Psoas muscle (tissue), 8 donors: ENCODE measurements at regions of chr11 and their contacts with region 1.

Region 1: GRCh38 chr11:46144741-46145140 is 23.5 kb upstream of the PHF21A start:
- DNase-seq: no peak
- ATAC-seq: no peak
- H3K4me3 ChIP-seq: no peak overlapping the region
- H3K27ac ChIP-seq: no peak overlapping the region
- H3K4me1 ChIP-seq: no peaks in the 10 kb centered on the region
- H3K27me3 ChIP-seq: peaks cover 0 to 19% (median 0%) of the 10 kb centered on the region in 3 donors
- CTCF ChIP-seq: no peak

Region 2: GRCh38 chr11:45930031-45930794 is 214.5 kb before region 1 on chr11:
- intact Hi-C with region 1: no loop called
- DNase-seq: no peak
- ATAC-seq: peak; percentile 33 to 54 (median 44)
- H3K4me3 ChIP-seq: no peak overlapping the region
- H3K27ac ChIP-seq: no peak overlapping the region
- H3K4me1 ChIP-seq: no peaks in the 10 kb centered on the region
- H3K27me3 ChIP-seq: peaks cover 0 to 7% (median 0%) of the 10 kb centered on the region in 3 donors
- CTCF ChIP-seq: no peak

Region 3: GRCh38 chr11:46160100-46160499 is 15.4 kb after region 1 on chr11:
- intact Hi-C with region 1: no loop called
- DNase-seq: no peak
- ATAC-seq: peak in 2 of 4 donors; percentile 21 to 57
- H3K4me3 ChIP-seq: no peak overlapping the region
- H3K27ac ChIP-seq: no peak overlapping the region
- H3K4me1 ChIP-seq: no peaks in the 10 kb centered on the region
- H3K27me3 ChIP-seq: peaks cover 0 to 35% (median 7%) of the 10 kb centered on the region in 3 donors
- CTCF ChIP-seq: no peak

Region 4: DNA sequence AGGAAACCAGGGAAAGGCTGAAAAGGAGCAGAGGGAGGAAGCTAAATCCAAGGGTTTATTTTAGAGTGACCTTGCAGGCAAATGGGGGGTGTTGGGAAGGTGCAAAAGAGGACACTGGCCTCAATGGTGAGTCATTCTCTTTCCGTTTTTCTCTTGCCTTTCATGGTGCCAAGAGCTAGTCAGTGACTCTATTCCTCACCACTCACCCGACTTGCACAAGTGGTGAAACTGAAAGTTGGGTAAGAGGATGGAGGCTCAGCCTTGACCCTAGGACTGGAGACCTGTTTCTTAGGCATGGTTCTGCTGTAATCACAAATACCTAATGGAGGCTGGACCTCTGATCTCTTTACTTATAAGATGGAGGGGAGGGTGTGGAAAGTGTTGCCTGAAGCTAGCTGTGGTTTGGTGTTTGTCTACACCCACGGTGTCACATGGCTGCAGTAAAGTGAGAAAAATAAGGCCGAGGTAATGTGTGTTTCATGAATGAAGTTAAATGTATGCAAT is 65.4 kb after region 1 on chr11:
- intact Hi-C with region 1: no loop called
- DNase-seq: no peak
- ATAC-seq: peak in 2 of 4 donors; percentile 48
- H3K4me3 ChIP-seq: no peak overlapping the region
- H3K27ac ChIP-seq: no peak overlapping the region
- H3K4me1 ChIP-seq: no peaks in the 10 kb centered on the region
- H3K27me3 ChIP-seq: peaks cover 0 to 20% (median 0%) of the 10 kb centered on the region in 3 donors
- CTCF ChIP-seq: no peak

Region 5: DNA sequence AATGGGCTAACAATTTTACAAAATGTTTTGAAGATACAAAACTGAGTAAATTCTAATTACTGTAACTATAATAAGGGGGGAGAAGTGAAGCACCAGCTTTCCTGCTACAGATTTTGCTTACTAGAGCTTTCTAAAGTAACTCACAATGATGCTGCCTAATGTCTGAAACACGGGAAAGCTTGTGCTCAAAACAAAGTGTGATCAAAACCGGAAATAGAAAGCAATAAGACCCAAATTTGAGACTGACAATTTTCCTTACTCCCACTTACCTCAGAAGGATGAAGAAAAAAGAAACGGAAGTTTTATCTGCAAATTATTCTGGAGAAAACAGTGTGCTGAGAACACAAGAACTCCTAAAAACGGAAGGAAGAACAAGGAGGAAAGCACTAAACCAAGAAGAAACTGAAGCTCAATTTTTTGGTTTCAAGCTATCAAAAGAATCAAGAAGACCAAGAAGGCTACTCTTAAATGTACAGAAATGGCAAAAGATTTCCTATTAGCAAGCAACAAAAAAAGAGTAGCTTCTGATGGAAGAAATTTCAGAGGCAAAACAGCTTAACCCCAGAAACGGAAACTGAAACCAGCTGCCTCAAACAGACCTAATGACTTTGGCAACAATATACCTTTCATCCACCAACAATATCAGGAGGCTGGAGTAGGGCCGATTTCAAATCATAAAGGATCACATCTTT is 415.7 kb after region 1 on chr11:
- intact Hi-C with region 1: loop called in 1 of 2 experiments (anchors 5 kb)
- DNase-seq: no peak
- ATAC-seq: peak in 3 of 4 donors; percentile 49 to 64 (median 49)
- H3K4me3 ChIP-seq: peak overlapping the region; percentile 53
- H3K27ac ChIP-seq: peak overlapping the region; percentile 66
- H3K4me1 ChIP-seq: peaks cover 38% of the 10 kb centered on the region
- H3K27me3 ChIP-seq: no peaks in the 10 kb centered on the region
- CTCF ChIP-seq: no peak